ENCODE measurements at regions of chr13 and their contacts with region 1.

Region 1: GRCh38 chr13:109162248-109163053 is 533.0 kb downstream of the MYO16 start:
- DNase-seq: peak; percentile 70
- H3K4me3 Mint-ChIP-seq: no peak overlapping the region
- H3K27ac Mint-ChIP-seq: no peak overlapping the region
- H3K4me1 Mint-ChIP-seq: peaks cover 8% of the 10 kb centered on the region
- H3K27me3 Mint-ChIP-seq: peaks cover 1% of the 10 kb centered on the region

Region 2: DNA sequence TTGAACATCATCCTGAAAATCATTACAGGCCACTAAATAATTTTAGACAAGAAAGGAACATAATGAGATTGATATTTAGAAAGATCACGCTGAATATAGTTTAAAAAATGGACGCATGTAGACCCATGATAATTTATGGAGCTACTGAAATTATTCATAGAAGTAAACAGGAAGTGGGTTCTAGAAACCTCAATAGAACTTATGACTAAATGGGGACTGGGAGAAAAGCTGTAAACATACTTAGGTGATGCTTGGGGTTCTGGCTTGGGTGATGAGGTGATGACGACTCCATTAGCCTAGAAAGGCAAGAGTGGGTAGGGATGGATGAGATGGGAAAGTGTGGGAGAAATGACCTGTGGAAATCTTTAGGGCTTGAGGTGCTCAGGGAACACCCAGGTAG is 49.0 kb before region 1 on chr13:
- CTCF ChIA-PET with region 1: no interaction called
- POLR2A ChIA-PET with region 1: no interaction called
- intact Hi-C with region 1: loop called (anchors 2 kb)
- DNase-seq: no peak
- H3K4me3 Mint-ChIP-seq: no peak overlapping the region
- H3K27ac Mint-ChIP-seq: no peak overlapping the region
- H3K4me1 Mint-ChIP-seq: peaks cover 13% of the 10 kb centered on the region
- H3K27me3 Mint-ChIP-seq: no peaks in the 10 kb centered on the region

Region 3: DNA sequence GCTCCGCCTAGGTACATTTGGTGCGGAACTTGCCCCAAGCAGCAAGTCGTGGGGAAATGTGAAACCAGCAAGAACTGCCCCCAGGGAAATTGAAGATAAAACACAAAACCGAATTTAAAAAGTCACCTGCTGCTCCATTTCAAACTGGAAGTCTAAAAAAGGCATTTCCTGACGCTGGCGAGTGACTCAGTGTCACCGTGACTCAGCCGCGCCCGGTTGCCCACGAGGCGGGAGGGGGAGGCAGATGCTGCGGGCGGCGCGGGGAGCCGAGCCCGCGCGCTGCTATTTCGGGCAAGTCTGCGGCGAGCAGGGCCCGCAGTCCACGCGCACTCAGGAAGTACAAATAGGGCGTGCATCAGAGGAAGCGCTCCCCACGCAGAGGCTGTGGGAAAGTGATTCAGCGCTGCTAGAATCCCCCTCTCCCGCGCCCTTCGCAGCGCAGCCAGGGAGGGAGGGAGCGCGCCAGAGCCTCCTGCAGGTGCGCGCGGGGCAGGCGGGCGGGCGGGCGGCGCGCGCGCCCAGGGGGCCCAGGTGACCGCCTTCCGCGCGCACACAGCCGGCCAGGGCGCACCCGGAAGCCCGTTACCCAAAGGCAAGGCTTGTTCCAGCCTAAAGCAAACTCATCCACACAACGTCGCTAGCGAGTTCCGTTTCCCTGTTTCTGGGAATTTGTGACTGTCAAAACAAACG is 975.7 kb after region 1 on chr13:
- CTCF ChIA-PET with region 1: no interaction called
- POLR2A ChIA-PET with region 1: no interaction called
- intact Hi-C with region 1: loop called (anchors 5 kb)
- DNase-seq: peak; percentile 86
- H3K4me3 Mint-ChIP-seq: peak overlapping the region; percentile 65
- H3K27ac Mint-ChIP-seq: peak overlapping the region; percentile 71
- H3K4me1 Mint-ChIP-seq: peaks cover 10% of the 10 kb centered on the region
- H3K27me3 Mint-ChIP-seq: peaks cover 41% of the 10 kb centered on the region

Measured in activated CD4-positive, alpha-beta memory T cell treated with anti-CD3 and anti-CD28 coated beads for 36 hours (primary cell).